CD4-positive, alpha-beta T cell (primary cell): ENCODE measurements at regions of chr12 and their contacts with region 1.

Region 1: GRCh38 chr12:92928962-92929915 is at the start of gene EEA1:
- DNase-seq: peak; percentile 88 to 97 (median 94)
- ATAC-seq: peak; percentile 77
- H3K4me3 ChIP-seq: peak within 1 kb of the TSS; percentile 81
- H3K4me3 Mint-ChIP-seq: peak within 1 kb of the TSS; percentile 91
- H3K27ac ChIP-seq: peak within 1 kb of the TSS; percentile 86 to 90
- H3K27ac Mint-ChIP-seq: peak within 1 kb of the TSS; percentile 94
- H3K4me1 ChIP-seq: peaks cover 23% of the 10 kb centered on the region
- H3K4me1 Mint-ChIP-seq: peaks cover 42% of the 10 kb centered on the region
- H3K27me3 ChIP-seq: no peaks in the 10 kb centered on the region
- H3K27me3 Mint-ChIP-seq: no peaks in the 10 kb centered on the region
- CTCF ChIP-seq: peak; percentile 28
- total RNA-seq, gene EEA1: 10.5 to 11.1 TPM

Region 2: DNA sequence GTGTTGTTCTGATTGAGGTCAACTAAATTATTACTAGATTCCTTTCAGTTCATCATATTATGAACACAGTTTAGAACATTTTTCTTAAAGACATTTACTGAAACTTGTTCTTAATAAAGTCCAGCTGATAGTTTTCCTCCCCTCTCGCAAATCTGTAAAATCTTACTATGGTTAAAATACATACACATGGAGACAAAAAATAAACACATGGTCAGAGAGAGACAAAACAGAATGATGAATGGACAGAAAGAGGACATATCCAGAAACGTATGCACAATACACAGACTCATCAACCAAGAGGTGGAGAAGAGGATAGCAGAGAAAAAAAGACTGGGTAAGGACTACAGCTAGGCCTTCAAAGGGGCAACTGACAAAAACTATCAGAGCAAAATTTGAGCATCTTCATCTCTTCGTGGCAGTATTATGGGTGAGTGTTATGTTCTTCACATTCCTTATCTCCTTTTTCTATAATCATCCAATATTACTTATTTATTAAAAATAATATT is 38.6 kb before region 1 on chr12:
- CTCF ChIA-PET with region 1: no interaction called
- POLR2A ChIA-PET with region 1: no interaction called
- intact Hi-C with region 1: loop called in 1 of 2 experiments (anchors 5 kb)
- DNase-seq: no peak
- ATAC-seq: no peak
- H3K4me3 ChIP-seq: no peak overlapping the region
- H3K4me3 Mint-ChIP-seq: no peak overlapping the region
- H3K27ac ChIP-seq: no peak overlapping the region
- H3K27ac Mint-ChIP-seq: no peak overlapping the region
- H3K4me1 ChIP-seq: no peaks in the 10 kb centered on the region
- H3K4me1 Mint-ChIP-seq: peaks cover 40% of the 10 kb centered on the region
- H3K27me3 ChIP-seq: no peaks in the 10 kb centered on the region
- H3K27me3 Mint-ChIP-seq: no peaks in the 10 kb centered on the region
- CTCF ChIP-seq: no peak

Region 3: DNA sequence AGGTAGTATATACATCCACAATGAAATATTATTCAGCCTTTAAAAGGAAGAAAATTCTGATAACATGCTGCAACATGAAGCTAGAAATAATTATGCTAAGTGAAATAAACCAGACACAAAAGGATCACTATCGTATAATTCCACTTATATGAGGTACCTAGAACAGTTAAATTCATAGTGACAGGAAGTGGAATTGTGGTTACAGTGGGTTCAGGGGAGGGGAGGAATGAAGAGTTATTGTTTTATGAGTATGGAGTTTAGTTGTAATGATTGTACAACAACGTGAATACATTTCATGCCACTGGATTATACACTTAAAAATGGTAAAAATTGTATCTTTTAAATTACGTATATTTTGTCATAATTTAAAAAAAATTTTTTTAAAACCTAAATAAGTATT is 21.1 kb before region 1 on chr12:
- CTCF ChIA-PET with region 1: interaction called, 9 read pairs
- POLR2A ChIA-PET with region 1: interaction called, 84 read pairs
- intact Hi-C with region 1: loop called in 1 of 2 experiments (anchors 2 kb)
- DNase-seq: peak in 5 of 14 experiments; percentile 13 to 69 (median 54)
- ATAC-seq: peak; percentile 86
- H3K4me3 ChIP-seq: no peak overlapping the region
- H3K4me3 Mint-ChIP-seq: peak overlapping the region; percentile 2
- H3K27ac ChIP-seq: no peak overlapping the region
- H3K27ac Mint-ChIP-seq: peak overlapping the region; percentile 84
- H3K4me1 ChIP-seq: peaks cover 18% of the 10 kb centered on the region
- H3K4me1 Mint-ChIP-seq: peaks cover 61% of the 10 kb centered on the region
- H3K27me3 ChIP-seq: no peaks in the 10 kb centered on the region
- H3K27me3 Mint-ChIP-seq: no peaks in the 10 kb centered on the region
- CTCF ChIP-seq: no peak

Region 4: DNA sequence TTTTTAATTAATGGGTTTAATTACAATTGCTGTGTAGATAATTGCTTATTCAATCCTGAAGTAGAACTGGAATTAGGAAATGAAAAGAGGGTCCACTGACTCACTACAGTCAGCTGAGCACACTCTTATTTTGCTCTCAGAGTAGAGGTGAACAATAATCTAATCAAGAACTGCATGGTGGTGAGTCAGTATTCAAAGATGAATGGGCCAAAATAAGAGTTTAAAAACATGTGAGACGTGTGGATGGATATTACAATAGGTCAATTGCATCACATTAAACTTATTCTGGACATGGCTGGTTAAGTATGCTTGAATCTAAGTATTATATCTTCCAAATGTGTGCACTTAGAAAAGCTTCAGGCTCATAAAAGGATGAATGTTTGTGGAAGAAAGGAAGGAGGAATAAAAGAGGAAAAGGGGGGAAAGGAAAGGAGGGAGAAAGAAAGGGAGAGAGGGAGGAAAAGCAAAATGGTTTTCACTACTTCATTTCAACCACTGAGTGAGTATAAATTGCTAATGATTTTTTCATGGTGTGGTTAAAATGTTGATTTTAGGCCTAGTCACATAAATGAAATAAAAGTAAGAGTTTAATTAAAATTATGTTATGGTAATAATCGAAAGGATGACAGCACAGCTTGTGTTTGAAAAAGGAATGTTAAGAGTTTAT is 26.9 kb after region 1 on chr12:
- CTCF ChIA-PET with region 1: no interaction called
- POLR2A ChIA-PET with region 1: no interaction called
- intact Hi-C with region 1: no loop called
- DNase-seq: no peak
- ATAC-seq: no peak
- H3K4me3 ChIP-seq: no peak overlapping the region
- H3K4me3 Mint-ChIP-seq: no peak overlapping the region
- H3K27ac ChIP-seq: no peak overlapping the region
- H3K27ac Mint-ChIP-seq: no peak overlapping the region
- H3K4me1 ChIP-seq: no peaks in the 10 kb centered on the region
- H3K4me1 Mint-ChIP-seq: no peaks in the 10 kb centered on the region
- H3K27me3 ChIP-seq: no peaks in the 10 kb centered on the region
- H3K27me3 Mint-ChIP-seq: peaks cover 4% of the 10 kb centered on the region
- CTCF ChIP-seq: no peak

Region 5: GRCh38 chr12:93198086-93198485 is 268.8 kb after region 1 on chr12:
- CTCF ChIA-PET with region 1: no interaction called
- POLR2A ChIA-PET with region 1: no interaction called
- intact Hi-C with region 1: no loop called
- DNase-seq: no peak
- ATAC-seq: no peak
- H3K4me3 ChIP-seq: no peak overlapping the region
- H3K4me3 Mint-ChIP-seq: no peak overlapping the region
- H3K27ac ChIP-seq: no peak overlapping the region
- H3K27ac Mint-ChIP-seq: no peak overlapping the region
- H3K4me1 ChIP-seq: no peaks in the 10 kb centered on the region
- H3K4me1 Mint-ChIP-seq: no peaks in the 10 kb centered on the region
- H3K27me3 ChIP-seq: no peaks in the 10 kb centered on the region
- H3K27me3 Mint-ChIP-seq: peaks cover 6% of the 10 kb centered on the region
- CTCF ChIP-seq: no peak

Region 6: DNA sequence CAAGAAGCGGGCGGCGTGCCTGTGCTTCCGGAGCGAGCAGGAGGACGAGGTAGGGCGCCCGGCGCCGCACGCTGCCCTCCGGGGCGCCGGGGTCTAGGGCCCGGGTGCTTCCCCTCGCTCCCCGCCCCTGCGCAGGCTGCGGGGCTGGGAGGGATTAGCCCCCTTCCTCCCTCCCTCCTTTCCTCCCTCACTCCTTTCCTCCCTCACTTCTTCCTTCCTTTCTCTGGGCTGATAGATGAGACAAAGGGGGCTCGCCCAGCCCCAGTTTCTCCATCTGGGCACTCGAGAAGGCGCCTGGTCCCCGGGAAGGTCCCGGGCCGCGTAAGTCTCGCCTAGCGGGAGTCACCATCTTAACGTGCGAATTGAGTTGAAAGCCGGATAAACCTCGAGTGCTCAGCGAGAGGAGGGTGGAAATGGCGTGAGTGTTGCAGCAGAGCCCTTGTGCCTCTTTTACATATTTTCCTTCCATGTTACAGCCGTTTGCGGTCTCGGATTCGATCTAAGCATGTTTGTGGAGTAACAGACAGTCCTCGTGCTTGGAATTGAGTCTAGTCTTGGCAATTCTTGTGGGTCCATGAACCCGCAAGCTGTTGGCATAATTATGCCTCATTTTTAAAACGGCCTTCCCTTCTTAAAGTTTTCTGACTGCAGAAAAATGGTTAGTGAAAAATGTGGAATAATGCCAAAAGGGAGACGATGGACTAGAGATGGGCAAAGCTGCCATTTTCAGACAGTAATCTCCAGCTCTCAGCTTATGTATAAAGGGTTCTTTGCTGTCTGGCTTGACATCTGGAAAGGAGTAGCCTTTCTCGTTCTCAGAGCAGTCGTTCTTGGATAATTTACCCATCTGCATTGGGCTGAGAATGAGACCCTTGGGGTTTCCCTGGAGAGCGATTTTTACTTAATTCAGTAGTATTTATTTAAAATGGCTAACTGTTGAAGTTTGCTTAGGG is 449.4 kb after region 1 on chr12:
- CTCF ChIA-PET with region 1: no interaction called
- POLR2A ChIA-PET with region 1: interaction called, 6 read pairs
- intact Hi-C with region 1: loop called (anchors 2 to 5 kb)
- DNase-seq: peak; percentile 33 to 86 (median 47)
- ATAC-seq: peak; percentile 54
- H3K4me3 ChIP-seq: peak overlapping the region; percentile 74
- H3K4me3 Mint-ChIP-seq: peak overlapping the region; percentile 100
- H3K27ac ChIP-seq: peak overlapping the region; percentile 85 to 88
- H3K27ac Mint-ChIP-seq: peak overlapping the region; percentile 99
- H3K4me1 ChIP-seq: peaks cover 36% of the 10 kb centered on the region
- H3K4me1 Mint-ChIP-seq: peaks cover 52% of the 10 kb centered on the region
- H3K27me3 ChIP-seq: no peaks in the 10 kb centered on the region
- H3K27me3 Mint-ChIP-seq: no peaks in the 10 kb centered on the region
- CTCF ChIP-seq: no peak

Region 7: GRCh38 chr12:93441617-93442410 is 512.6 kb after region 1 on chr12 and contains the start of gene UBE2N:
- CTCF ChIA-PET with region 1: no interaction called
- POLR2A ChIA-PET with region 1: interaction called, 7 read pairs
- intact Hi-C with region 1: loop called in 1 of 2 experiments (anchors 5 kb)
- DNase-seq: peak; percentile 92 to 98 (median 95)
- ATAC-seq: peak; percentile 81
- H3K4me3 ChIP-seq: peak within 1 kb of the TSS; percentile 76
- H3K4me3 Mint-ChIP-seq: peak within 1 kb of the TSS; percentile 96
- H3K27ac ChIP-seq: peak within 1 kb of the TSS; percentile 89 to 91
- H3K27ac Mint-ChIP-seq: peak within 1 kb of the TSS; percentile 93
- H3K4me1 ChIP-seq: peaks cover 29% of the 10 kb centered on the region
- H3K4me1 Mint-ChIP-seq: peaks cover 53% of the 10 kb centered on the region
- H3K27me3 ChIP-seq: no peaks in the 10 kb centered on the region
- H3K27me3 Mint-ChIP-seq: no peaks in the 10 kb centered on the region
- CTCF ChIP-seq: no peak
- total RNA-seq, gene UBE2N: 89.8 to 101 TPM